ENCODE measurements at regions of chr5 and their contacts with region 1.

Region 1: GRCh38 chr5:157575381-157576020 is at the start of gene ADAM19:
- DNase-seq: peak; percentile 69 to 82 (median 71)
- ATAC-seq: peak; percentile 53 to 91 (median 89)
- H3K4me3 ChIP-seq: peak within 1 kb of the TSS; percentile 59 to 94 (median 86)
- H3K27ac ChIP-seq: peak within 1 kb of the TSS; percentile 33 to 93 (median 87)
- H3K4me1 ChIP-seq: peaks cover 0 to 53% (median 25%) of the 10 kb centered on the region in 12 donors
- H3K27me3 ChIP-seq: peaks cover 0 to 14% (median 0%) of the 10 kb centered on the region in 9 donors
- CTCF ChIP-seq: peak in 5 of 12 donors; percentile 5 to 28 (median 20)
- POLR2A ChIP-seq: no peak
- total RNA-seq, gene ADAM19: 6.5 to 47.6 (median 19.0) TPM

Region 2: DNA sequence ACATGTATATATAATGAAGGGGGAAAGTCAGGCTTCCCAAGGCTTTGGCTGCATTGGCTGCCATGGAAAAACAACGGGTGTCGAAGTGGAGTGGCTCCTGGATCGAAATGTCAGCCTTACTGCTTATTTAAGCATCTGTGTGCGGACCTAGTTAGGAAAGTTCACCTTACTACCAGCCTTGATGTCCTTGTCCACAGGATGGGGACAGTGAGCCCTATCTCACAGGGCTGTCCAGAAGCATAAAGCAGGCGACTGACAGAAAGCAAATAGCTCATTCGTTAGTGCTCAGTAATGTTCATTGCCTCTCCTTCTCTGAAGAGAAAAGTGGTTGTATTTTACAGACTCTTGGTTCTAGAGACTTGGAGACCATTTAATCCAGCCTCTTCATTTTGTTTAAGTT is 197.0 kb before region 1 on chr5:
- intact Hi-C with region 1: no loop called
- DNase-seq: no peak
- ATAC-seq: no peak
- H3K4me3 ChIP-seq: no peak overlapping the region
- H3K27ac ChIP-seq: peak overlapping the region in 1 of 12 donors; percentile 1
- H3K4me1 ChIP-seq: peaks cover 0 to 7% (median 0%) of the 10 kb centered on the region in 12 donors
- H3K27me3 ChIP-seq: no peaks in the 10 kb centered on the region
- CTCF ChIP-seq: no peak
- POLR2A ChIP-seq: no peak

Region 3: GRCh38 chr5:157511651-157512644 is 63.6 kb before region 1 on chr5:
- intact Hi-C with region 1: loop called in 5 of 10 experiments (anchors 2 to 10 kb)
- DNase-seq: peak; percentile 90 to 96 (median 94)
- ATAC-seq: peak; percentile 87 to 96 (median 94)
- H3K4me3 ChIP-seq: peak overlapping the region in 1 of 12 donors; percentile 7
- H3K27ac ChIP-seq: peak overlapping the region in 11 of 12 donors; percentile 46 to 81 (median 73)
- H3K4me1 ChIP-seq: peaks cover 0 to 57% (median 39%) of the 10 kb centered on the region in 12 donors
- H3K27me3 ChIP-seq: no peaks in the 10 kb centered on the region
- CTCF ChIP-seq: no peak
- POLR2A ChIP-seq: no peak

Region 4: GRCh38 chr5:157670662-157671591 is 95.4 kb after region 1 on chr5 and contains the start of gene C5orf52:
- intact Hi-C with region 1: no loop called
- DNase-seq: peak; percentile 27 to 70 (median 45)
- ATAC-seq: peak in 3 of 4 donors; percentile 59 to 79 (median 63)
- H3K4me3 ChIP-seq: peak within 1 kb of the TSS; percentile 41 to 72 (median 62)
- H3K27ac ChIP-seq: peak within 1 kb of the TSS in 2 of 12 donors; percentile 1 to 20
- H3K4me1 ChIP-seq: peaks cover 0 to 18% (median 7%) of the 10 kb centered on the region in 12 donors
- H3K27me3 ChIP-seq: peaks cover 4 to 24% (median 6%) of the 10 kb centered on the region in 9 donors
- CTCF ChIP-seq: no peak
- POLR2A ChIP-seq: no peak
- total RNA-seq, gene C5orf52: not detected